ENCODE measurements at regions of chr11 and their contacts with region 1.

Region 1: DNA sequence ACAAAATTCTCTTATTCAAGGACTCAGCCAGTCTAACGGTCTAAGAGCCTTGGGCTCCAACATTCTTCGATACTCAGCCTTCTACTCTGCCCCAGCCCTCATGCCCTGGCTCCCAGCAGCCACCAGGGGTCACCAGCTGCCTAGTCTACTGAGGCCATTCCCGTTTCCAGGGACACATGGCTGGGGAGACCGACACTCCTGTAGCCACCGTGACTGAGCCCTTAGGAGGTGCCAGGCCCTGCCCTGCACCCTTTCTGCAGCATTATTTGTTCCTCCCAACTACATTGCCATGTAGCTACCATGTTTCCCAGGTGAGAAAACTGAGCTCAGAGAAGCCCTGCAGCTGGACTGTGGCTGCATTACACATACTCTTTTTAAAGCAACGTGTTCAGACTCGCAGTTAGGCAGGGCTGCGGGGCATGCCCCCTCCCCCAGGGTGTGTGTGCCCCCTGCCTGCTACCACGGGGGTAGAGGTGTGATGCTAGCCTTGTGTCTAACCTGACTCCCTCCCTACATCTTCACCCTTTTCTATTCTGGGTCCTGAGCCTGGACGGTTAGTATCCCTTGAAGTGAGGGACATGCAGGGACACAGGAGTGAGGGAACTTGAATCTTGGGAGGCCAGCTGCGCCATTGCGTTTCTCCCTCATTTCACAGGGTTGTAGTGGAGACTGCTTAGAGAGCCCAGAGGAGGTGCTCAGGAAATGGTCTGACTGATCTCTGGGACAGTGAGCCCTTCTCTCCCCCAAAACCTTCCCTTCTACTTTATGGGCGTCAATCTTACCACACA is 17.5 kb downstream of the ATG16L2 start:
- DNase-seq: peak; percentile 85 to 91 (median 88)
- ATAC-seq: peak; percentile 73 to 81 (median 76)
- H3K4me3 ChIP-seq: no peak overlapping the region
- H3K27ac ChIP-seq: peak overlapping the region; percentile 80 to 98 (median 90)
- H3K4me1 ChIP-seq: peaks cover 39 to 85% (median 61%) of the 10 kb centered on the region in 12 donors
- H3K27me3 ChIP-seq: no peaks in the 10 kb centered on the region
- CTCF ChIP-seq: peak; percentile 91 to 99 (median 97)
- POLR2A ChIP-seq: no peak

Region 2: DNA sequence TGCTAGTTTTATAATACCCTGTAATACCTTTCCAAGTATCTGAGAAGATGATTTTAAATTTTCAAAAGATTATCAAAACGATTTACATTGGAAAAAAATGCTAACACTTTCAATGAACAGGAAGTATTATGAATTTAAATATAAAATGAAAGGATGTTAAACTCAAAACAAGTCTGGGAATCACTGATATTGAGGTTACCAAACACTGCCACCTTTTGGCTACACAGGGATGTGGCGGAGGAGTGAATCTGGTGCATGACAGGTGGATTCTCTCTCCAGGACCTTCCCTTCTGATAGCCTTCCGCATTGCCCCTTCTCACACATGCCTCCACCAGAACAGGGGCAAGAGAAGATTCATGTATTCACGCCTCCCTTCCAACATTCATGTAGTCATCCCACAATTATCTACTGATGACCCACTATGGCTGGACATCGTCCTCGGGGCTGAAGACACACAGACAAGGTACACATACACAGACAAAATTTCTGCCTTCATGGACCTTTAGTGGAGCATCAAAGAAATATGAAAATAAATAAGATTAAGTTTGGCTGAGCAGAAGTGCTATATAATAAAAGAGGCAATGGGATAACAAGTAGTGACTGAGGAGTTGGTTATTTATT is 17.2 kb after region 1 on chr11:
- intact Hi-C with region 1: loop called in 7 of 10 experiments (anchors 1 to 2 kb)
- DNase-seq: no peak
- ATAC-seq: peak in 3 of 4 donors; percentile 40 to 54 (median 49)
- H3K4me3 ChIP-seq: no peak overlapping the region
- H3K27ac ChIP-seq: peak overlapping the region in 2 of 12 donors; percentile 30 to 47
- H3K4me1 ChIP-seq: peaks cover 0 to 18% (median 10%) of the 10 kb centered on the region in 12 donors
- H3K27me3 ChIP-seq: no peaks in the 10 kb centered on the region
- CTCF ChIP-seq: peak; percentile 56 to 84 (median 71)
- POLR2A ChIP-seq: no peak

Region 3: DNA sequence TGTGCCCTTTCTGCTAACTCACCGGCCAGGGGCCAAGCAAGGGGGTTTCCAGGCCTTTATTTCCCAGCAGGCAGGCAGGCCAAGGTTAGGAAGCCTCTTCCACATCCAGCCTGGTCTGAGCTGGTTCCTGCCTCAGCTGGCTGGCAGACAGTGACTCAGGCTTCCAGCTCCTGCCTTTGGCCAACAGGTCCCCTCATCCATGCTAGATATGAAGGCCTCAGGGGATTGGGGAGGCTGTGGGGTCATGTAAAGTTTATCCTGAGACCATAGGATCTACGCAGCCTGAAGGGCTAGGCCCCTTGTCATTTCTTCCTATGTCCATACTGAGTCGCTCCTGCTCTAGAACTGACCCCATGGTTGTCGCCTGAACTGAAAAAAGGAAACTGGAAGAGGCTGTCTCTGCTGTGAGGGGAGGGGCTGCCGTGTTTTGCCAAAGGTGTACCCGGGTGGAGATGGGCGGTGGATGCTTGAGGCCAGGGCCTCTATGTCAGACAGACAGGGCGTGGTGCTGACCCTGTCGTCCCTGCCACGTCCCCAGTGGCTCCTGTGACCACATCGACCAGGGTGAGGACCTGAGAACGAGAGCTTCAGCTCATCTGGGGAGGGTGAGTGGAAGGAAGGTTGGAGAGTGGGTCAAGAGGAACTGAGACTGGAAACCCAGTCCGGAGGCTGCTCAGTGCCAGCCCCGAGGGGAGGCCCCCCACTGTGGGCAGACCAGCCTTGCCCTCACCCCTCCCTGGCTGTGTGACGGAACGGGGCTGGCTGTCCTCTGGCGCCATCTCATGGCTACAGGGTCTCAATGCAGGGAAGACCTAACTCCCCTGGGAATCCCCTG is 457.4 kb after region 1 on chr11:
- intact Hi-C with region 1: loop called in 2 of 10 experiments (anchors 2 to 5 kb)
- DNase-seq: peak; percentile 78 to 88 (median 83)
- ATAC-seq: peak; percentile 57 to 84 (median 80)
- H3K4me3 ChIP-seq: peak overlapping the region in 9 of 12 donors; percentile 14 to 54 (median 41)
- H3K27ac ChIP-seq: peak overlapping the region in 11 of 12 donors; percentile 19 to 95 (median 58)
- H3K4me1 ChIP-seq: peaks cover 0 to 67% (median 29%) of the 10 kb centered on the region in 12 donors
- H3K27me3 ChIP-seq: no peaks in the 10 kb centered on the region
- CTCF ChIP-seq: peak; percentile 88 to 96 (median 92)
- POLR2A ChIP-seq: no peak

Measured in heart left ventricle (tissue), 16 donors.